ENCODE measurements at regions of chr10 and their contacts with region 1.

Region 1: DNA sequence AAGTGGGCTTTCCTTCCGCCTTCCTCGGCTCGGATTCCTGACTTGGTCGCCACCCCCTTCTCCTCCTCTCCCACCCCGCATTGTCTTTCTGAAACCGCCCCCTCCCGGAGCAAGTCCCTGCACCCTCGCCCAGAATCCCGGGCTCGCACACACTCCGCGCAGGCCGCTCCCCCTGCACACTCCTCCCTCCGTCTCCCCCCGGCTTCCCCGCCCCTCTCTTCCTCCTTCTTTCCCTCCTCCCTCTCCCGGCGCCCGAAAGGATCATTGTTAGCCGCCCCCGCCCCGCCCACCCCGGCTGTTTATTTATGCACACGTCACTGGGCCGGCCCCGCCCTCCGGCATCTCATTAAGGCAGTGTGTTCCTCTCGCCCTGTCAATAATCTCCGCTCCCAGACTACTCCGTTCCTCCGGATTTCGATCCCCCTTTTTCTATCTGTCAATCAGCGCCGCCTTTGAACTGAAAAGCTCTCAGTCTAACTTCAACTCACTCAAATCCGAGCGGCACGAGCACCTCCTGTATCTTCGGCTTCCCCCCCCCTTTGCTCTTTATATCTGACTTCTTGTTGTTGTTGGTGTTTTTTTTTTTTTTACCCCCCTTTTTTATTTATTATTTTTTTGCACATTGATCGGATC is at the start of gene TCF7L2:
- DNase-seq: peak; percentile 93
- ATAC-seq: peak; percentile 68
- H3K4me3 ChIP-seq: peak within 1 kb of the TSS; percentile 95
- H3K27ac ChIP-seq: peak within 1 kb of the TSS; percentile 72
- H3K4me1 ChIP-seq: peaks cover 19% of the 10 kb centered on the region
- H3K27me3 ChIP-seq: no peaks in the 10 kb centered on the region
- CTCF ChIP-seq: no peak
- total RNA-seq, gene TCF7L2: 14.3 and 16.1 TPM in 2 replicates

Region 2: DNA sequence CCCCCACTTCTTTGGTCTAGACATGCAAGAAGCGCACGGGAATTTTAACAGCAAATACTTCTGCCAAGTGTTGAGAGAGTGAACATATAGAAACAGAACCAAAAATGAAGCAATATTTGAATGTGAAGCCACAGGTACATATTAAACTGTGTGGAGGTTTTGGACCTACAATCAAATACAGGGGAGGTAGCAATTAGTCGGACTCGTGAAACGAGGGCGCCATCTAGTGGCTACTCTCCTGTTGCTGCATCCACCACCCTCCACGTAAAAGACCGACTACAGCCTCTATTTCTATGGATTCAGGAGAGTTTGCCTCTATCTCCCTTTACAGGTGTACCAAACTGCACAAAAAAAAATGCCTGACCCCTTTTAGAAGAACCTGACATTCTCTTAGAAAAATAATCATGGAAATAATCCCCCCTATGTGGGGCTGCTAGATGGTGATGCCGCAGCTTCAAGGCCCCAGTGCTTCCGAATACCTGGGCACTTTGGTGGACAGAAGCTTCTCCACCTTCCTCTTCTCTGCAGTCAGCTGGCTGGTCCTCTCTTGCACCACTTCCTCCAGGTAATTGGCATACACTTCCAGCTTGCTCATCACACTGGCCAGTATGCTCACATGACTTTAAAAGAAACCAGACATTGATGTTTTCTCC is 635.0 kb before region 1 on chr10:
- CTCF ChIA-PET with region 1: no interaction called
- POLR2A ChIA-PET with region 1: no interaction called
- intact Hi-C with region 1: no loop called
- DNase-seq: peak; percentile 76
- ATAC-seq: peak; percentile 95
- H3K4me3 ChIP-seq: no peak overlapping the region
- H3K27ac ChIP-seq: no peak overlapping the region
- H3K4me1 ChIP-seq: peaks cover 4% of the 10 kb centered on the region; the same call in 1 of the 2 replicates
- H3K27me3 ChIP-seq: no peaks in the 10 kb centered on the region
- CTCF ChIP-seq: peak; percentile 83

Region 3: GRCh38 chr10:112565434-112566053 is 384.4 kb before region 1 on chr10:
- CTCF ChIA-PET with region 1: no interaction called
- POLR2A ChIA-PET with region 1: no interaction called
- intact Hi-C with region 1: loop called (anchors 2 kb)
- DNase-seq: peak; percentile 83
- ATAC-seq: peak; percentile 54
- H3K4me3 ChIP-seq: no peak overlapping the region
- H3K27ac ChIP-seq: no peak overlapping the region
- H3K4me1 ChIP-seq: peaks cover 21% of the 10 kb centered on the region
- H3K27me3 ChIP-seq: no peaks in the 10 kb centered on the region
- CTCF ChIP-seq: peak; percentile 65

Region 4: DNA sequence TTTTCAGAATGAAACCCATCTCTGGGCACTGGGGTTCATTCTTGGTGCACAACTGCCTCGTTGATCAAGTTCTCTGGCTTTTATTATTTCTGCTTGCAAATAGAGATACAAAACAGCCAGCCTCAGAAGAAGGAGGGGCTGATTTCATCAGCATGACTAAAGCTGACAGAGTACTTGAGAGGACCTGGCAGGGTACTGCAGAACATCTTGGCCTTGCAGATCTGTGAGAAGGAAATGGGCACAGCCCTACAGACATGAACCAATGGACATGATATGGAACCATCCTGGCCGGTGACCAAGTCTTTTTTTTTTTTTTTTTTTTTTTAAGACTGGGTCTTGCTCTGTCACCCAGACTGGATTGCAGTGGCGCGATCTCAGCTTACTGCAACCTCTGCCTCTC is 262.3 kb before region 1 on chr10:
- CTCF ChIA-PET with region 1: no interaction called
- POLR2A ChIA-PET with region 1: no interaction called
- intact Hi-C with region 1: no loop called
- DNase-seq: peak; percentile 54
- ATAC-seq: peak; percentile 82
- H3K4me3 ChIP-seq: no peak overlapping the region
- H3K27ac ChIP-seq: no peak overlapping the region
- H3K4me1 ChIP-seq: peaks cover 4% of the 10 kb centered on the region; the same call in 1 of the 2 replicates
- H3K27me3 ChIP-seq: no peaks in the 10 kb centered on the region
- CTCF ChIP-seq: no peak

Region 5: DNA sequence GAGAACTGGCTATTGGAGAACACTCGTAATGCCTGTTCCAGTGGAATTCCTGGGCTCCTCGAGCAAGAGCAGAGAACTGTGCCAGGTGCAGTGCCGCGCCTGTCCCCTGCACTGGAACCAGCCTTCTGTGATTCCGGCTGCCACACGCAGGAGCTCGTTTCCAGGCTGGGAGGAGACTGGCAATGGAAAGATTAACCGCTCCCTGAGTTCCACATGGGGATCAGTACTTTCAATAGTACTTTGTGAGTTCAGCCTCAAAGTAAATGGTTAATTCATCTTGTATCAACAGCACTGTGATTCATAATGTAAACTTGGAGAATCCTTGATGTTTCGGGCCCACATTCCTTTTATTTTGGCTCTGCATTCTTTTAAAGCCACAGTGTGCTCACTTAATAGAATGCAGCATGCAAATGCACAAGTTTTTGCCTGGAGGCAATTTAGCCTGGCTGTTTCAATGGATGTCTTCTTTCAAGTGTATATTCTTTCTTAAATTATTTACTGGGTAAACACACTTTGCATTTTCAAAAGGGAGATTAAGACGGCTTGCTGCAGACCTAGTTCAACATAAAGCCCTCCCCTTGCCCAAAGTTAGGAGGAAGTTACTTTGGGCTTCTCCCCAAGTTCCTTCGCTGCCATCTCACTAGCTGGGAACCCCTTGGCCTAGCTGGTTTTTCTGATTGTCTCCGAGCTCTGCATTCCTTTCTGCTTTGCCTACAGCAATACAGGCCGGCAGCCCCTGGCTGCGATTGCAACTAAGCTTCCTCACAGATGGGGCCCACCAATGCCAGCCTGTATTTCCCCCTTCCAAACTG is 138.0 kb before region 1 on chr10:
- CTCF ChIA-PET with region 1: no interaction called
- POLR2A ChIA-PET with region 1: no interaction called
- intact Hi-C with region 1: loop called (anchors 1 kb)
- DNase-seq: peak; percentile 96
- ATAC-seq: peak; percentile 85
- H3K4me3 ChIP-seq: no peak overlapping the region
- H3K27ac ChIP-seq: peak overlapping the region; percentile 78
- H3K4me1 ChIP-seq: peaks cover 41% of the 10 kb centered on the region
- H3K27me3 ChIP-seq: no peaks in the 10 kb centered on the region
- CTCF ChIP-seq: no peak

Region 6: GRCh38 chr10:113093188-113094113 is 143.5 kb after region 1 on chr10:
- CTCF ChIA-PET with region 1: no interaction called
- POLR2A ChIA-PET with region 1: interaction called, 3 read pairs
- intact Hi-C with region 1: loop called (anchors 2 kb)
- DNase-seq: peak; percentile 93
- ATAC-seq: peak; percentile 74
- H3K4me3 ChIP-seq: peak overlapping the region; percentile 46
- H3K27ac ChIP-seq: peak overlapping the region; percentile 98
- H3K4me1 ChIP-seq: peaks cover 46% of the 10 kb centered on the region
- H3K27me3 ChIP-seq: no peaks in the 10 kb centered on the region
- CTCF ChIP-seq: no peak